Activated T-helper 2 cell treated with anti-CD3 and anti-CD28 coated beads, Interferon-gamma antibody, Interleukin-2, Interleukin-4, amounts not matched to agents 10 μg/mL and 5 μg/mL and 100 μg/mL, durations not matched to agents 14 hours and 24 hours and 36 hours (primary cell): ENCODE measurements at regions of chr2 and their contacts with region 1.

Region 1: GRCh38 chr2:218216674-218217359 is at the start of gene ARPC2:
- DNase-seq: peak; percentile 95
- H3K4me3 Mint-ChIP-seq: peak within 1 kb of the TSS; percentile 89
- H3K27ac Mint-ChIP-seq: peak within 1 kb of the TSS; percentile 95
- H3K4me1 Mint-ChIP-seq: peaks cover 35% of the 10 kb centered on the region
- H3K27me3 Mint-ChIP-seq: peaks cover 2% of the 10 kb centered on the region
- total RNA-seq, gene ARPC2: 639 and 643 TPM in 2 replicates

Region 2: GRCh38 chr2:217785544-217786045 is 431.2 kb before region 1 on chr2:
- intact Hi-C with region 1: no loop called
- DNase-seq: peak; percentile 63
- H3K4me3 Mint-ChIP-seq: no peak overlapping the region
- H3K27ac Mint-ChIP-seq: no peak overlapping the region
- H3K4me1 Mint-ChIP-seq: peaks cover 12% of the 10 kb centered on the region
- H3K27me3 Mint-ChIP-seq: peaks cover 9% of the 10 kb centered on the region

Region 3: GRCh38 chr2:218074031-218074430 is 142.8 kb before region 1 on chr2:
- intact Hi-C with region 1: no loop called
- DNase-seq: no peak
- H3K4me3 Mint-ChIP-seq: no peak overlapping the region
- H3K27ac Mint-ChIP-seq: no peak overlapping the region
- H3K4me1 Mint-ChIP-seq: peaks cover 2% of the 10 kb centered on the region
- H3K27me3 Mint-ChIP-seq: no peaks in the 10 kb centered on the region

Region 4: GRCh38 chr2:218186355-218186766 is 30.5 kb before region 1 on chr2:
- intact Hi-C with region 1: loop called (anchors 1 kb)
- DNase-seq: peak; percentile 56
- H3K4me3 Mint-ChIP-seq: no peak overlapping the region
- H3K27ac Mint-ChIP-seq: no peak overlapping the region
- H3K4me1 Mint-ChIP-seq: peaks cover 13% of the 10 kb centered on the region
- H3K27me3 Mint-ChIP-seq: peaks cover 7% of the 10 kb centered on the region

Region 5: DNA sequence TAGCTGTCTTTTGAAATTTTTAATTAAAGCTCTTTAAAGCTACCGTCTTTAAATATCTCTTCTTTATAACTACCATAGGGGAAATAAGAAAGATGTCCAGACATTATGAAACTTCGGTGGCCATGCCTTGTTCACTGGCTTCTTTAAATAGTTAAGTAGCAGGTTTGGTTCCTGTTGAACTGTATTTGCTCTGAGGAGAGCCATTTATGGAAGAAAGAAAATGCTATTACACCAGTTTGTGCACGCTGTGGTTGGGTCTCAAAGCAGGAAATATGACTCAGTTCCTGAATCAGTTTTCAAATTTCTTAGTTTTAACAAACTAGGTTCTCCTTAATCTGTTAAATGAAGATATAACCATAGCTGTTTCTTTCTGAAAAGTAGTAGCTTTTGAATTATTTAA is 12.4 kb after region 1 on chr2:
- intact Hi-C with region 1: loop called (anchors 1 kb)
- DNase-seq: peak; percentile 38
- H3K4me3 Mint-ChIP-seq: peak overlapping the region; percentile 47
- H3K27ac Mint-ChIP-seq: peak overlapping the region; percentile 85
- H3K4me1 Mint-ChIP-seq: peaks cover 59% of the 10 kb centered on the region
- H3K27me3 Mint-ChIP-seq: no peaks in the 10 kb centered on the region

Region 6: DNA sequence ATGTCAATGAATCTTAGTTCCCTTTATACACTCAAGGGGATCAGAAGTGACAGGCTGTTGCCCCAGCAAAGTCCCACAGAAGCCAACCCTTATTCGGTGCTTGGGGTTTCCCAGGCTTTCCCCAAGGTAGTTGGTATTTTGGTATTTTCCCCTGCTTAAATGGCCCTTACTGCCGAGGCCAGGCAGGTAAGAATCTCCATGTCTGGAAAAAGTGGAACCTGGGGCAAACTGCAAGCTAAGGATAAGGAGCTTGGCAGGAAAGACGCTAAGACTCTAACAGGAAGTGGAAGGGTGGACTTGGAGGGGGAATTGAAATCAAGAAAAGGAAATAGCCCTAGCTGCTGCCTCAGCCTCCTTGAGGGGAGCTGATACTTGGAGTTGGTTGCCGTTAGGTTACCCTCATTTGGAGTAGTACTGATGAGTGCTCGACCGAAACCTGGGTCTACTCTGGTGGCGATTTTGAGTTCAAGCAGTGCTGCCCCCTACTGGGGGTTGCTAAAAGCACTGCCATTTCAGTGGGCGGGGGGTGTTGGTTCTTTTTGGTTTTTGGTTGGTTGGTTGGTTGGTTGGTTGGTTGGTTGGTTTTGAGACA is 40.7 kb after region 1 on chr2:
- intact Hi-C with region 1: loop called (anchors 2 kb)
- DNase-seq: peak; percentile 58
- H3K4me3 Mint-ChIP-seq: no peak overlapping the region
- H3K27ac Mint-ChIP-seq: peak overlapping the region; percentile 83
- H3K4me1 Mint-ChIP-seq: peaks cover 15% of the 10 kb centered on the region
- H3K27me3 Mint-ChIP-seq: no peaks in the 10 kb centered on the region

Region 7: DNA sequence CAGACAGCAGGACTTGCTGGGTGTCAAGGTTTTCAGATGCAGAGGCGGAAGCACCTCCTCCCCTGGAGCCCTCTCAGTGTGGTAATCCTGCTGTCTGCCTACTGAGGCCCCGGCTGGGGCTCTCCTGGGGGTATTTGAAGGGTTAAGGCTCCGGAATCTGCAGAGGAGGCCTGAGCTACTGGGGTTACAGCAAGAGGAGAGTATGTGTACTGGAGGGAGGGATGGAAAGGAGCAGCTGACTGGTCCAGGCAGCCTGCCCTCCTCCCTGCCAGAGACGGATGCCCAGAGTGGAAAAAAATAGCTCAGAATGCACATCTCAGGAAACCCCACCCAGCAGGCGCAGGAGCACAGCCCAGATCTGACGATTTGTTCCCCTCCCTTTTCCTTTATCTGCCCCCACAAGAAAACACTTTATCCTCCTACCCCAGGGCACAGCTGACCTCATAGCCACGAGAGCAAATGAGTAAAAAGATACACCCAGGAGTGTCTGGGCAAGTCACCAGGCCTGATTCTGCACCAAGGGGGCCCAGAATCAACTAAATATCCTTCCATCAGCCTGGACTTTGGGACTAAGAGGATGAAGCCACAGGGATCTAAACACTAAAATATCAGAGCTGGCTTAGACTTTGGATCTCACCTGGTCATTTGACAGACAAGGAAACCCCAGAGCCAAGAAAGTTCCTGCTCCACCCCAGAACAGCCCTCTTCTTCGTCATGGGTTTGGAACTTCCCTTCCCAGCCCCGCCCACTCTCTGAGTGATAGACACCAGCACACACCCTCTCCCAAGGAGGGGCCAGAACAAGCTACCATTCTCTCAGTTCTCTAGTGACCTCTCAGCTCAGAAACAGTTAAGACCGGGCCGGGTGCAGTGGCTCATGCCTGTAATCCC is 70.0 kb after region 1 on chr2:
- intact Hi-C with region 1: loop called (anchors 2 kb)
- DNase-seq: peak; percentile 82
- H3K4me3 Mint-ChIP-seq: peak overlapping the region; percentile 85
- H3K27ac Mint-ChIP-seq: peak overlapping the region; percentile 98
- H3K4me1 Mint-ChIP-seq: peaks cover 69% of the 10 kb centered on the region
- H3K27me3 Mint-ChIP-seq: no peaks in the 10 kb centered on the region